ENCODE measurements at regions of chr11 and their contacts with region 1.

Region 1: GRCh38 chr11:20050551-20051333 is 109.5 kb downstream of the DBX1 start:
- DNase-seq: no peak
- ATAC-seq: no peak
- H3K4me3 ChIP-seq: no peak overlapping the region
- H3K27ac ChIP-seq: peak overlapping the region in 7 of 10 donors; percentile 20 to 97 (median 90)
- H3K4me1 ChIP-seq: peaks cover 0 to 57% (median 32%) of the 10 kb centered on the region in 9 donors
- H3K27me3 ChIP-seq: no peaks in the 10 kb centered on the region
- CTCF ChIP-seq: no peak

Region 2: DNA sequence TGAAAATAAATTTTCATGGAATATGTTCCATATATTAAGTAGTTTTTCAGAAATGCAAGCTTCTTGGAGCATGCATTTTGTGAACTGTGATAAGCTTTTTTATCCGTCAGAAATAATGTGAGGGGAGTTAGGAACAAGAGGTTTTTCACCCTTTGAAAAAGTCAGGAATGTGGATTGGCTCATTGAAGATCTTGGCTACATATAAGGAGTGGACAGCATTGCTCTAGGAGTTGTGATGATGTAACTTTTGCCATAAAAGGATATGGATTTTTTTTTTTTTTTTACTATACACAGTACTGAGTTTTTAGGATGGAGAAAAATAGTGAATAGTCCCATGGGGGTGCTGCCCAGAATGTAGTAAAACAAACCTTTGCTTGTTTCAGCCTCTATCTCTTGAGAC is 157.9 kb before region 1 on chr11:
- intact Hi-C with region 1: no loop called
- DNase-seq: no peak
- ATAC-seq: no peak
- H3K4me3 ChIP-seq: no peak overlapping the region
- H3K27ac ChIP-seq: no peak overlapping the region
- H3K4me1 ChIP-seq: peaks cover 0 to 24% (median 10%) of the 10 kb centered on the region in 9 donors
- H3K27me3 ChIP-seq: no peaks in the 10 kb centered on the region
- CTCF ChIP-seq: no peak

Region 3: DNA sequence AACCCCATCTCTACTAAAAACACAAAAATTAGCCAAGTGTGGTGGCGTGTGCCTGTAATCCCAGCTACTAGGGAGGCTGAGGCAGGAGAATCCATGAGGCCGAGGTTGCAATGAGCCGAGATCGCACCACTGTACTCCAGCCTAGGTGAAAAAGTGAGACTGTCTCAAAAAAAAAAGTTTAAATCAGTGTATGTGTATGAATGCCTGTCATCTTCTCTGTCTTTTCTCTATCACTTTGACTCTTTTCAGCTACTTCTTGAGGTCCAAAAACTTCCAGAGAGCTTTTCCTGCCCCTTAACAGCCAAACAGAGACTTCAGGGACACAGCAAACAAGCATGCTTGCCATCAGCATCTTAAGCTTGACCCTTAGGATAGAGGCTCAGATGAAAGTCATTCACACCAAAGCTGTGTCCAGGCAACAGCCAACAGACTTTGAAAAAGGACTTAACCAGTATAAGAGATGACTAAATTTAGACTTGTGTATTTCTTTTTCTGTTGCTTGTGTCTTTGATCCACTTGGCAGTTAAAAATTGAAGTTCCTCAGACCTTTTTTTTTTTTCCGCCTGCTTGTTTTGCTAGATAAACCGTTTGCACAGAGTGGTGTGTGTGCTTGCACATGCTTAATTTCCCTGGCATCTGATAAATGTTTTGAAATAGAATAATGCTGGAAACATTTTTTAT is 42.4 kb before region 1 on chr11:
- intact Hi-C with region 1: loop called in 2 of 10 experiments (anchors 5 kb)
- DNase-seq: no peak
- ATAC-seq: peak in 2 of 8 donors; percentile 20 to 48
- H3K4me3 ChIP-seq: no peak overlapping the region
- H3K27ac ChIP-seq: peak overlapping the region in 6 of 10 donors; percentile 58 to 75 (median 70)
- H3K4me1 ChIP-seq: peaks cover 0 to 55% (median 20%) of the 10 kb centered on the region in 9 donors
- H3K27me3 ChIP-seq: no peaks in the 10 kb centered on the region
- CTCF ChIP-seq: no peak

Region 4: GRCh38 chr11:20110908-20111669 is 60.3 kb after region 1 on chr11:
- intact Hi-C with region 1: loop called in 1 of 10 experiments (anchors 5 kb)
- DNase-seq: peak in 1 of 2 donors; percentile 18
- ATAC-seq: peak in 7 of 8 donors; percentile 7 to 53 (median 32)
- H3K4me3 ChIP-seq: no peak overlapping the region
- H3K27ac ChIP-seq: peak overlapping the region in 7 of 10 donors; percentile 60 to 84 (median 76)
- H3K4me1 ChIP-seq: peaks cover 5 to 27% (median 24%) of the 10 kb centered on the region in 9 donors
- H3K27me3 ChIP-seq: no peaks in the 10 kb centered on the region
- CTCF ChIP-seq: peak; percentile 69 to 88 (median 84)

Region 5: DNA sequence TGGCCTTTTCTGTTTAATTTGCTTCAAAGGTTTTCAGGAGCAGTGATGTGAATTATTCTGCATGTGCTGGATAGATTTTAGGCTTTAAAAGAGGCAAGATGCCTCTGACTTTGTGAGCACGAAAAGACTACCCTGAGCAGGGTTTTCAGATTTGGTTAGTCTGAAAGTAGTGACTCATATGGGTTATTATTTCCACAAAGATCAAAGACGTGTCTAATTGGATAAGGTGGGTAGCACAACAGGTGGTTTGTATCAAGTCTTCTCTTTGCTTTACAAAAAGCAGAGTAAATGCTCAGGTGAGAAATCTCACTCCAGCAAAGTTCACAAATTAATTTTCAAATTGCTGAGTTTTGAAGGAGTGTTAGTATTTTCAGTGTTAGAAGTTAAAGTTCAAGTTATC is 147.1 kb after region 1 on chr11:
- intact Hi-C with region 1: no loop called
- DNase-seq: no peak
- ATAC-seq: no peak
- H3K4me3 ChIP-seq: no peak overlapping the region
- H3K27ac ChIP-seq: no peak overlapping the region
- H3K4me1 ChIP-seq: no peaks in the 10 kb centered on the region
- H3K27me3 ChIP-seq: peaks cover 0 to 50% (median 7%) of the 10 kb centered on the region in 7 donors
- CTCF ChIP-seq: no peak

Measured in heart right ventricle (tissue), 16 donors.